HCT116 (cell line): ENCODE measurements at regions of chr4 and their contacts with region 1.

Region 1: GRCh38 chr4:87390891-87391575 is at the start of gene HSD17B11:
- DNase-seq: peak; percentile 82
- ATAC-seq: peak; percentile 97
- H3K4me3 ChIP-seq: peak within 1 kb of the TSS; percentile 76 to 90
- H3K27ac ChIP-seq: peak within 1 kb of the TSS; percentile 70
- H3K4me1 ChIP-seq: peaks cover 0 to 11% of the 10 kb centered on the region in 2 experiments; a peak in 1 of 4 replicates
- H3K27me3 ChIP-seq: no peaks in the 10 kb centered on the region
- CTCF ChIP-seq: peak in 1 of 3 experiments; percentile 20; a peak in 2 of 6 replicates
- POLR2A ChIP-seq: peak; percentile 95
- RAD21 ChIP-seq: no peak
- total RNA-seq, gene HSD17B11: 47.4 TPM

Region 2: GRCh38 chr4:87422104-87423052 is 31.3 kb after region 1 on chr4 and contains the start of gene NUDT9:
- CTCF ChIA-PET with region 1: no interaction called
- POLR2A ChIA-PET with region 1: interaction called, 7 read pairs
- RAD21 ChIA-PET with region 1: no interaction called
- intact Hi-C with region 1: loop called (anchors 2 kb)
- DNase-seq: peak; percentile 94
- ATAC-seq: peak; percentile 91
- H3K4me3 ChIP-seq: peak within 1 kb of the TSS; percentile 82 to 84
- H3K27ac ChIP-seq: peak within 1 kb of the TSS; percentile 77
- H3K4me1 ChIP-seq: peaks cover 8 to 23% of the 10 kb centered on the region in 2 experiments; a peak in 3 of 4 replicates
- H3K27me3 ChIP-seq: no peaks in the 10 kb centered on the region
- CTCF ChIP-seq: no peak
- POLR2A ChIP-seq: peak; percentile 62
- RAD21 ChIP-seq: no peak
- total RNA-seq, gene NUDT9: 13.5 TPM

Region 3: GRCh38 chr4:87835197-87835596 is 444.2 kb after region 1 on chr4:
- CTCF ChIA-PET with region 1: no interaction called
- POLR2A ChIA-PET with region 1: no interaction called
- RAD21 ChIA-PET with region 1: no interaction called
- intact Hi-C with region 1: no loop called
- DNase-seq: no peak
- ATAC-seq: no peak
- H3K4me3 ChIP-seq: no peak overlapping the region
- H3K27ac ChIP-seq: no peak overlapping the region
- H3K4me1 ChIP-seq: 0 out of 4 replicates have a peak, but pooled peaks cover 0 to 2% of the 10 kb centered on the region in 2 experiments
- H3K27me3 ChIP-seq: no peaks in the 10 kb centered on the region
- CTCF ChIP-seq: no peak
- POLR2A ChIP-seq: no peak
- RAD21 ChIP-seq: no peak